ENCODE measurements at regions of chr1 and their contacts with region 1.

Region 1: GRCh38 chr1:23772049-23772853 is 6.0 kb upstream of the PITHD1 start:
- DNase-seq: peak; percentile 92
- ATAC-seq: peak; percentile 97
- H3K4me3 Mint-ChIP-seq: no peak overlapping the region
- H3K27ac Mint-ChIP-seq: no peak overlapping the region
- H3K4me1 Mint-ChIP-seq: peaks cover 4% of the 10 kb centered on the region; the same call in 1 of the 2 replicates
- H3K27me3 Mint-ChIP-seq: no peaks in the 10 kb centered on the region
- CTCF ChIP-seq: peak; percentile 87

Region 2: DNA sequence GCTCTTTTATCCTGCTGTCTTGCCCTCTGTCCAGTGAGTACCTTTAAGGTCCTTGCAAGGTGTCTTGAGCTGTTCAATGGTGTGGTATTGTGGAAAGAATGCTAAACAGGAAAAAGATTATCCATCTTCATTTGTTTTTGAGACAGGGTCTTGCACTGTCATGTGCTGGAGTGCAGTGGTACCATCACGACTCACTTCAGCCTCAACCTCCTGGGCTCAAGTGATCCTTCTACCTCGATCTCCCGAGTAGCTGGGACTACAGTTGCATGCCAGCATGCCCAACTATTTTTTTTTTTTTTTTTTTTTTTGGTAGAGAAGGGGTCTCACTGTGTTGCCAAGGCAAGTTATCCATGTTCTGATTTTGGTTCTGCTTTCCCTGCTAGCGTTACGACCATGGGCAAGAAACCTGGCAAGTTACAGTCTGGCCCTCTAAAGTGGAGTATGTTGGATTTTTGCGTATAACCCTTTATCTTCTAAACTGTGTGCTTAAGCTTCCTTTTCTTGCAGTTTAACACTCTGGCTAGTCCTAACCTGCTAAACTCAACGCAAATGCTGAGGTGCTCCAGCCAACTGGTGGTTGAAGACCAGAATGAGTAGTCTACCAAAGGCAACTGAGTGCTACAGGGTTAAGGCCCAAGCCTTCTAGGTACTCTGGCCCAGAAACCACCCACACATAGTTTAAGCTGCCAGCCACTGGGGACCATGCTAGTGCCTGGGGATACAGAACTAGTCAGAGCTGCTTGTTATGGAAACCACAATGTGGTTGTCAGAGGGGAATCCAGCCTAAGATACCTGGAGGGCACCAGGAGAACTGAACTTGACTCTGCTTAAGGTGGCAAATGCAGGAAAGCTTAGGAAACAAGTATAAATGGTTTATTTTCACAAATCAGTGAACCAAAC is 72.7 kb before region 1 on chr1:
- CTCF ChIA-PET with region 1: interaction called, 12 read pairs
- POLR2A ChIA-PET with region 1: no interaction called
- DNase-seq: no peak
- ATAC-seq: peak; percentile 6; the same call in 1 of the 2 replicates
- H3K4me3 Mint-ChIP-seq: no peak overlapping the region
- H3K27ac Mint-ChIP-seq: peak overlapping the region; percentile 83
- H3K4me1 Mint-ChIP-seq: peaks cover 27% of the 10 kb centered on the region
- H3K27me3 Mint-ChIP-seq: no peaks in the 10 kb centered on the region
- CTCF ChIP-seq: no peak

Region 3: GRCh38 chr1:23759277-23759676 is 13.0 kb before region 1 on chr1:
- CTCF ChIA-PET with region 1: interaction called, 11 read pairs
- POLR2A ChIA-PET with region 1: no interaction called
- DNase-seq: no peak
- ATAC-seq: no peak
- H3K4me3 Mint-ChIP-seq: no peak overlapping the region
- H3K27ac Mint-ChIP-seq: no peak overlapping the region
- H3K4me1 Mint-ChIP-seq: no peaks in the 10 kb centered on the region
- H3K27me3 Mint-ChIP-seq: no peaks in the 10 kb centered on the region
- CTCF ChIP-seq: no peak

Region 4: GRCh38 chr1:23800400-23801337 is 28.4 kb after region 1 on chr1 and contains the start of gene GALE:
- CTCF ChIA-PET with region 1: interaction called, 64 read pairs
- POLR2A ChIA-PET with region 1: interaction called, 3 read pairs
- DNase-seq: peak; percentile 80
- ATAC-seq: peak; percentile 48
- H3K4me3 Mint-ChIP-seq: peak within 1 kb of the TSS; percentile 96
- H3K27ac Mint-ChIP-seq: peak within 1 kb of the TSS; percentile 94
- H3K4me1 Mint-ChIP-seq: peaks cover 14% of the 10 kb centered on the region
- H3K27me3 Mint-ChIP-seq: peaks cover 17% of the 10 kb centered on the region
- CTCF ChIP-seq: no peak
- total RNA-seq, gene GALE: 30.3 to 36.6 TPM (median 35.8 TPM) in 3 replicates

Region 5: GRCh38 chr1:23916209-23917131 is 144.2 kb after region 1 on chr1:
- CTCF ChIA-PET with region 1: interaction called, 32 read pairs
- POLR2A ChIA-PET with region 1: no interaction called
- DNase-seq: peak; percentile 80
- ATAC-seq: peak; percentile 97
- H3K4me3 Mint-ChIP-seq: no peak overlapping the region
- H3K27ac Mint-ChIP-seq: no peak overlapping the region
- H3K4me1 Mint-ChIP-seq: peaks cover 6% of the 10 kb centered on the region
- H3K27me3 Mint-ChIP-seq: peaks cover 6% of the 10 kb centered on the region; the same call in 1 of the 2 replicates
- CTCF ChIP-seq: no peak

Measured in WTC11 (cell line).